Activated naive CD4-positive, alpha-beta T cell treated with anti-CD3 and anti-CD28 coated beads, Interleukin-2, amount 10 ng/mL, durations not matched to agents 7 days and 5 days (primary cell): ENCODE measurements at regions of chr11 and their contacts with region 1.

Region 1: DNA sequence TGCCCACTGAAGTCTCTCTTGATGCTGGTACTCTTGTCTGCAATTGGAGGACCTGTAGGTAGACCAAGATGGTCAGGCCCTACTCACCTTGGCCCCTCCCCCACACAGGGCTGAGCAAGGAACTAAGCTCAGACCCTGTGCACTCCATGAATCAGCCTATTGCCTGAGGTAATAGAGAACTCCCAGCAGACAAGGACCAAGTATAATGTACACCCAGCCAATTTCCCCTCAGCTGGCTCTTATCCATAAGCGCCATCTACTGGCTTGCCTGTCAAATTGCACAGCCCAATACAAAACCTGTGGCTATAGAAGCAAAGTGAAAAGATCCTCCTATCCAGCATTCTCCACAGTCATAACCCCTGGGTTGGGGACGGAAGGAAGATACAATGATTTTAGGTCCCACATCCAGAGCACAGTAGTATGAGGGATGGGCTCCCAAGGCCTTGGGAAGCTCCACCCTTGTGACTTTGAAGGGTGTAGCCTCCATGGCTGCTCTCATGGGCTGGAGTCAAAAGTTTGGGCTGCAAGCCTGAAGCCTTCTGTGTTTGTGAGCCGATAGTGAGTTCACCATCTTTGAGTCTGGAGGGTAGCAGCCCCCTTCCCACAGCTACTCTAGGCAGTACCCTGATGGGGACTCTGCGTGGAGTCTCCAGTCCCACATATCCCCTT is 56.0 kb downstream of the GLYATL2 start:
- DNase-seq: peak; percentile 53
- H3K4me3 Mint-ChIP-seq: no peak overlapping the region
- H3K27ac Mint-ChIP-seq: no peak overlapping the region
- H3K4me1 Mint-ChIP-seq: no peaks in the 10 kb centered on the region
- H3K27me3 Mint-ChIP-seq: no peaks in the 10 kb centered on the region

Region 2: DNA sequence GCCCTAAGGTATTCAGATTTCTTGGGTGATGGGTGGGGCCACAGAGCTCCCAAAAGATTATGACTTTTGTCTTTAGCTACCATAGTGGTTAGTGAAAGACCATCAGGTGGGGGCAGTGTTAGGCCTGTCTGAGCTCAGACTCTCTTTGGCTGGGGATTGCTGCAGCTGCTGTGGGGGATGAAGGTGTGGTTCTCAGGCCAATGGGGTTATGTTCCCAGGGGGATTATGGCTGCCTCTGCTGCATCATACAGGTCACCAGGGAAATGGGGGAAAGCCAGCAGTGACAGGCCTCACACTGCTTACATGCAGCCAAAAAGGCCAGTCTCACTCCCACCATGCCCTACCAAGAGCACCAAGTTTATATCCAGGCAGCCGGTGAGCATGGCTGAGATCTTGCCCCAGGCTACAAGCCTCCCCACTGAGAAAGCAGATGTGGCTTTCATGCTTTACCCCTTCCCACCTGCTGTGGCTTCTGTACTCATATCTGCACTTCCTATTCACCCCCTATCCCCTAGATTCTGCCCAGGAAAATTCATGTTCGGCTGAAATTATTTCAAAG is 141.3 kb before region 1 on chr11:
- CTCF ChIA-PET with region 1: interaction called, 10 read pairs
- DNase-seq: no peak
- H3K4me3 Mint-ChIP-seq: no peak overlapping the region
- H3K27ac Mint-ChIP-seq: no peak overlapping the region
- H3K4me1 Mint-ChIP-seq: no peaks in the 10 kb centered on the region
- H3K27me3 Mint-ChIP-seq: peaks cover 3% of the 10 kb centered on the region

Region 3: DNA sequence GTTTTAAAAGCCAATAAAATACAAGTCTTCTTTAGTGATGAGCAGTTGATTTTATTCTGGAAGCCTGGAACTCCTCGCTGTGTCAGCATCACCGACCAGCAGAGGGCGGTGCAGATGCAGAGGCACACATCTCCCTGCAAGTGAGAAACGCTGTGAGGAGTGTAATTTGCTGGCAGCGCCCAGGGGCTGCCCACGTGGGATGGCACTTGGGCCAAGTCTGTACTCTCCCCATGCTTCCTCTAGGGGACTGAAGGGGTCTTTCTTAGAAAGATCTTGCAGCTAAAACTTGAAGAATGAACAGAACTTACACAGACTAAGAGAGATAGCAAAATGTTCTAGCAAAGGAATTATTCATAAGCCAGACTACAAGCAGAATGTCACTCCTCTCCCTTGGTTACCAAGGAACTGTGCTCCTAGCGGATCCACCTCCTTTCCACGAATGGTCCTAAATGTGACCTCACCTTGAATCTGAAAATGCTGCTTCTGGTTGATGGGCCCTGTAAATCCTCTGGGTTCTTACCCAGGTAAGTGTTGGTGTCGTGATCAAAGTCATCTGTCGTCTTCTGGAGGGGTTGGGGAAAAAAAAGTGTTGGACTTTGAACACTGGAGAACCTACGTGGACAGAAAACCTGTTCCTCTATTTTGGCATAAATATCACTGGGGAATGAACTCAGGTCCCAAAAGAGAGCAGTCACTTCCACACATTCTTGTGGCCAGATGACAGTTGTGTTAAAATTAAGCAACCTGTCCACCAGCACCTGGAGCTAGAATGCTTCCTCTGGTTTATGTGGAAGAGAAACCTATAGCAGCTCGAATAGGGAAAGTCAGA is 134.2 kb before region 1 on chr11:
- CTCF ChIA-PET with region 1: interaction called, 33 read pairs
- DNase-seq: peak; percentile 82
- H3K4me3 Mint-ChIP-seq: no peak overlapping the region
- H3K27ac Mint-ChIP-seq: no peak overlapping the region
- H3K4me1 Mint-ChIP-seq: peaks cover 10% of the 10 kb centered on the region
- H3K27me3 Mint-ChIP-seq: no peaks in the 10 kb centered on the region

Region 4: DNA sequence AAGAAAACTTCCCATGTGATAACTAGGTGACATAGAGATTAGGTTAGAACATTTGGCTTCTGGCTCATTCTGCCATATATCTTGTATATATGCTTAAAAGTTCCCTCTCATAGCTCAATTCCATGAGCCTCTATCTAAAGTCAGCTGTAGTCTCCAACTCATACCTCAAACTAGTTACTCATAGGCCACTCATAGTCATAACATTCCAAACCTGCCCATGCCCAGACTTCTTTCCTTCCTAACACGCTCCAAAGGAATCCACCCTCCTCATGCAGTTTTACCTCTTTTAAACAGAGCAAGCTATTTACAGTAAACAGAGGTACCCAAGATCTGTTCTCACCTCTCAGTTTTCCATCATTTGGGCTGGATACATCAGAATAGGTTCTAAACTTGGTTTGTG is 16.6 kb after region 1 on chr11:
- CTCF ChIA-PET with region 1: no interaction called
- DNase-seq: no peak
- H3K4me3 Mint-ChIP-seq: no peak overlapping the region
- H3K27ac Mint-ChIP-seq: no peak overlapping the region
- H3K4me1 Mint-ChIP-seq: no peaks in the 10 kb centered on the region
- H3K27me3 Mint-ChIP-seq: no peaks in the 10 kb centered on the region